Mammary epithelial cell (primary cell): ENCODE measurements at regions of chr20 and their contacts with region 1.

Region 1: GRCh38 chr20:37990571-37991151 is 42.6 kb downstream of the TTI1 start:
- DNase-seq: peak; percentile 91
- H3K4me3 ChIP-seq: no peak overlapping the region
- H3K27ac ChIP-seq: peak overlapping the region; percentile 76
- H3K4me1 ChIP-seq: peaks cover 58% of the 10 kb centered on the region
- H3K27me3 ChIP-seq: no peaks in the 10 kb centered on the region
- CTCF ChIP-seq: no peak

Region 2: DNA sequence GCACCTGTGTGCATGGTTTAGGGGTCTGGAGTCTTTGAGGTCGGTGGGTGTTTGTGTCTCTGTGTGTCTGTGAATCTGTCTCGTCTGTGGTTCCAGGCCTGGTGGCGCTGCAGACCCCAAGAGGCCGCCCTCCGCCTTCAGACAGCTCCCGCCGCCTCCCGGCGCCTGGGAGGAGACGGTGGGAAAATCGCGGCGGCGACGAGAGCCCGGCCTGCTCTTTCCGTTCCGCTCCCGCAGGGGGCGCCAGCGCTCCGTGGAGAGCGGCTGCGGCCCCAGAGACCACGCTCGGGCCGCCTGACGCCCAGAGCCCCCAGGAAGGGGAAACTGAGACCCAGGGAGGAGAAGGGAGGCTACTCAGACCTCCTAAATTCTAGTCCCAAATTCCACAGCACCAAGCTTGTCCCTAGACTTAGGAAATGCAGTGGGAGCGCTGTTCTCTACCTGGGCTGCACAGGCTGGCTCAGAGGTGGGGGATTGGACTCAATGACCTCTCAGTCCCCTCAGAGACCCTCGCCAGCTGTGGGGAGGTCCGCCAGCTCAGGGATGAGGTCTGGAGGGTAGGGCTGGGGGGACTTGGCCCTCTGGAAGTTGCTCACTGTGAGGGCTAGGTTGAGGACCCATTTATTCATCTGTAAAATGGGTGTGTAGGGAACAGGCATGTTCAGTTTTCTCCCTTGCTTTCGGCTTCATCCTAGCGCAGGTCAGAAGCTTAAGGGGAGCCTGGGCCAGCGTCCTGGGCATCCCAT is 426.1 kb before region 1 on chr20:
- CTCF ChIA-PET with region 1: no interaction called
- dilution Hi-C with region 1: no loop called
- in situ Hi-C with region 1: loop called in 1 of 2 experiments (anchors 10 kb)
- intact Hi-C with region 1: loop called (anchors 1 kb)
- DNase-seq: peak; percentile 7
- H3K4me3 ChIP-seq: no peak overlapping the region
- H3K27ac ChIP-seq: no peak overlapping the region
- H3K4me1 ChIP-seq: no peaks in the 10 kb centered on the region
- H3K27me3 ChIP-seq: peaks cover 3% of the 10 kb centered on the region
- CTCF ChIP-seq: peak; percentile 57 to 96

Region 3: GRCh38 chr20:37651932-37652331 is 338.7 kb before region 1 on chr20:
- CTCF ChIA-PET with region 1: no interaction called
- dilution Hi-C with region 1: no loop called
- in situ Hi-C with region 1: no loop called
- intact Hi-C with region 1: loop called (anchors 1 kb)
- DNase-seq: peak; percentile 17
- H3K4me3 ChIP-seq: no peak overlapping the region
- H3K27ac ChIP-seq: no peak overlapping the region
- H3K4me1 ChIP-seq: no peaks in the 10 kb centered on the region
- H3K27me3 ChIP-seq: no peaks in the 10 kb centered on the region
- CTCF ChIP-seq: peak; percentile 37 to 56

Region 4: DNA sequence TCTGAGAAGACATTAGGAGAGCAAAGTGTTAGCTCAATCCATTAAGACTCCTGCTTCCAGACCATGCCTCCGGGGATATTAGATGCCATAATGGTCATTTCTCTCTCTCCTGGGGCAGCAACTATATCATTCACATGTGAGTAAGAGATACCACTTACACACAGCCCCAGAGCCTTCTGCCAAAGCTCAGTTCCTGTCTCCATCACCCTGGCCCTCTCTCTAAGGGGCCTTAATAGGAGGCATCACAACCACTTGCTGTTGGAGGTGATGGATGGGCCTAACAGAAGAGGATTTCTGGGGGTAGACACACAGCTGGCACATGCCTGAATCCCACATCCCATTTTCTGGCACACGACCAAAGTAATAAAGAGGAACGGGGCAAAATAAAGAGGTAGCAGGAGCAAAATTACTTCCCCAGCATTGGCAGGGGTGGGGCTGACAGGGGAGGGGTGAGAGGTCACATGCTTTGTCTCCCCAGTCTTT is 121.8 kb before region 1 on chr20:
- CTCF ChIA-PET with region 1: interaction called, 10 read pairs
- dilution Hi-C with region 1: no loop called
- in situ Hi-C with region 1: no loop called
- intact Hi-C with region 1: no loop called
- DNase-seq: no peak
- H3K4me3 ChIP-seq: no peak overlapping the region
- H3K27ac ChIP-seq: no peak overlapping the region
- H3K4me1 ChIP-seq: no peaks in the 10 kb centered on the region
- H3K27me3 ChIP-seq: no peaks in the 10 kb centered on the region
- CTCF ChIP-seq: no peak

Region 5: GRCh38 chr20:38057351-38057972 is 66.8 kb after region 1 on chr20:
- CTCF ChIA-PET with region 1: interaction called, 10 read pairs
- dilution Hi-C with region 1: no loop called
- in situ Hi-C with region 1: no loop called
- intact Hi-C with region 1: no loop called
- DNase-seq: peak; percentile 53
- H3K4me3 ChIP-seq: no peak overlapping the region
- H3K27ac ChIP-seq: no peak overlapping the region
- H3K4me1 ChIP-seq: no peaks in the 10 kb centered on the region
- H3K27me3 ChIP-seq: no peaks in the 10 kb centered on the region
- CTCF ChIP-seq: peak; percentile 75 to 82